ENCODE measurements at regions of chr3 and their contacts with region 1.

Region 1: GRCh38 chr3:150546226-150547044 is at the starts of genes EIF2A and SERP1:
- DNase-seq: peak; percentile 95 to 98
- H3K4me3 ChIP-seq: peak within 1 kb of the TSS; percentile 66
- H3K4me1 ChIP-seq: peaks cover 31% of the 10 kb centered on the region
- H3K27me3 ChIP-seq: no peaks in the 10 kb centered on the region

Region 2: GRCh38 chr3:150022381-150023238 is 523.8 kb before region 1 on chr3:
- in situ Hi-C with region 1: no loop called
- DNase-seq: peak in 1 of 2 experiments; percentile 10
- H3K4me3 ChIP-seq: no peak overlapping the region
- H3K4me1 ChIP-seq: no peaks in the 10 kb centered on the region
- H3K27me3 ChIP-seq: no peaks in the 10 kb centered on the region

Region 3: DNA sequence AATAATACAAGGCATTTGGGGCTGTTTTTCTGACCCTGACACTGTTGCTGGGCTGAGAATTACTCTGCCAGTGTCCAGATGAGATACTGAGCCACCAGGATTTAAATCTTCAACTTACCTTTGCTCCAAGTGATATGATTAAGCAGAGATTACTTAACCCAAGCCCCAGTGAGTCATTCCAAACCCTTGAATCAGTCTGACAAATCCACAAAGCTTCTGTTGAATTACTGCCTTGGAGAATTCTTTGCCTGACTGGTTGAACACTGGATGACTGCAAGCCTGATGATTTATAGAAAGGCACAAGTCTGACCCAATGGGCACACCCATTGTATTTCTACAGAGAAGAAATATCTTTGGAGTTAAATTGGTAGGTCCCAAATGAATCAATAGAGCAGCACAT is 226.5 kb before region 1 on chr3:
- in situ Hi-C with region 1: no loop called
- DNase-seq: no peak
- H3K4me3 ChIP-seq: no peak overlapping the region
- H3K4me1 ChIP-seq: no peaks in the 10 kb centered on the region
- H3K27me3 ChIP-seq: no peaks in the 10 kb centered on the region

Region 4: GRCh38 chr3:150603153-150603979 is 56.9 kb after region 1 on chr3 and contains the start of gene SELENOT:
- in situ Hi-C with region 1: loop called (anchors 5 kb)
- DNase-seq: peak; percentile 93 to 96
- H3K4me3 ChIP-seq: peak within 1 kb of the TSS; percentile 71
- H3K4me1 ChIP-seq: peaks cover 53% of the 10 kb centered on the region
- H3K27me3 ChIP-seq: no peaks in the 10 kb centered on the region

Region 5: DNA sequence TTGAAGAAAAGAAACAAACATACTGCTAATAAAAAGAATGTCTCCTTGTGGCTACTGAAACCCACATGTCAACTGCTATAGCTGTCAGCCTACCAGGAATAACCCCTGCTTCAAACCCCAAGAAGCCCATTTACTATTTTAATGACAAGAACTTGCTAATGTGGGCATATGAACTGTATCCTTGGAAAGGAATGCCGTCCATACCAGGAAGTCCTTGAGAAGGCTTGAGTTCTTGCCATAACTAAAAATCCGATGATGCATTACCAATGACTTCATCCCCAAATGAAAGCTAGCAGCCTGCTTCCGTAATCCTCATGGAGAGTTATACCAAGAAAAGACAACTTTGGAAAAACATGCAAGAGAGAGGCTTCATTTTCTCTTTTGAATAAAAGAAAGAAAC is 324.0 kb after region 1 on chr3:
- in situ Hi-C with region 1: loop called (anchors 25 kb)
- DNase-seq: no peak
- H3K4me3 ChIP-seq: no peak overlapping the region
- H3K4me1 ChIP-seq: peaks cover 16% of the 10 kb centered on the region
- H3K27me3 ChIP-seq: peaks cover 40% of the 10 kb centered on the region

Region 6: DNA sequence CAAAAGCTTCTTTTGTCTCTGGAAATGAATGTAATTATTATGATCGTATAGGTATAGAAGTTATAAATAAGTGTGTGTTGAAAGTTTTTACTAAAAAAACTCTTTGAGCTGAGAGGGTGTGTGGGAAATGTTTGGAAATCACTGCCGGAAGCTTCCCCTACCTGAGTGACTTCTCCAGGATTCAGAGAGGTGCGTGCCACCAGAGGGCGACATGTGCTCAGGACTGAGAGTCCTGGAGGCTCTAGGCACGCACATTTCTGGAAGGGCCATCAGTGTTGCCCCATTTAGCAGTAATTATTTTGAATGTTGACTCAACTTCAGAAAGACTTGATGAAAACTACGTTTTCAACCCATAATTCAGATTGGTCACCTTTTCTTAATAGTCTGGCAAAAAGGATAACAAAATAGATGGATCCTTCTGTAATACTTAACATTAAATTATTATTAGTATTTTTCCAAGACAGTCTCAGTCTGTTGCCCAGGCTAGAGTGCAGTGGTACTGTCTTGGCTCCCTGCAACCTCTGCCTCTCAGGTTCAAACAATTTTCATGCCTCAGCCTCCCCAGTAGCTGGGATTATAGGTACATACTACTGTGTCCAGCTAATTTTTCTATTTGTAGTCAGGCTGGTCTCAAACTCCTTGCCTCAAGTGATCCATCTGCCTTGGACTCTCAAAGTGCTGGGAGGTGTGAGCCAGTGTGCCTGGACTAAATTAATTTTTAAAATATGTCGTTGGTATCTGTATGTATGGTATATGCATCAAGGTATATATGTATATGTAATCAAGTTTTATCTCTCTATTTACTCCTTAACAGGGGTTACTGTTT is 622.0 kb after region 1 on chr3:
- in situ Hi-C with region 1: loop called (anchors 25 kb)
- DNase-seq: peak; percentile 42 to 85
- H3K4me3 ChIP-seq: no peak overlapping the region
- H3K4me1 ChIP-seq: no peaks in the 10 kb centered on the region
- H3K27me3 ChIP-seq: no peaks in the 10 kb centered on the region

Measured in HAP-1 (cell line).